Activated CD4-positive, alpha-beta T cell treated with anti-CD3 and anti-CD28 coated beads, Interleukin-2, amount 10 ng/mL, durations not matched to agents 7 days and 5 days (primary cell): ENCODE measurements at regions of chr12 and their contacts with region 1.

Region 1: DNA sequence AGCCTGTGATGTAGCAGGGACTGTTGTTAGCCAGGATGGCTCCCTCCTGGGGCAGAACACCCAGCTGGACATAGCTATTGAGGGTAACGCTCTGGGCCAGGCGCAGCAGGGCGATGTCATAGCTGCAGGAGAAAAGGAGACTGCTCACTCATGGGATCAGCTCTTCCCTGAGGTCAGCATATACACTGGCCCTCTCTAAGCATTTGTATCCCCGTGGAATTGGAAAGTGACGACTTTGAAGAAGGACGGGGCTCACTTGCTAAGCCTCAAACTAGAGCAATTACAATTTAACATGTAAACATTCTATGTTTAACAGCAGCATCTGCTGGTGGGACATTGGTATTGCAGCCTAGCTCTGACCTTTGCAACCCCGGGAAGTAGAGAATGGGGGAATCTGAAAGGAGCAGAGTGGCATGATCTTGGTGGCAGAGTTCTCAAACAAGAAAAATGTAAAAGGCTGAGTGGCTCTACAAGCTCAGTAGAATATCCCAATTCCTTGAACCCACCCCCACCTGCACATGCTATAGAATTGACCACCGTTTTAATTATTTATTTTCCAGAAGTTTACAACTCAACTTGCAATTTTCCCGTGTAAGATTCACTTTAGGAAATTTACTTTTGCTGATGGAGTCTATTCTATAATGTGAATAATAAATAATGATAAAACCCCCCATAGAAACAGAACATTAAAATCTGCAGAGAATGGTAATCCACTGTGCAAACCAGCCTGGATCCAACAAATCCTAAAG is 5.0 kb downstream of the CELA1 start:
- DNase-seq: peak; percentile 81
- H3K4me3 Mint-ChIP-seq: no peak overlapping the region
- H3K27ac Mint-ChIP-seq: peak overlapping the region; percentile 69
- H3K4me1 Mint-ChIP-seq: peaks cover 13% of the 10 kb centered on the region
- H3K27me3 Mint-ChIP-seq: no peaks in the 10 kb centered on the region

Region 2: DNA sequence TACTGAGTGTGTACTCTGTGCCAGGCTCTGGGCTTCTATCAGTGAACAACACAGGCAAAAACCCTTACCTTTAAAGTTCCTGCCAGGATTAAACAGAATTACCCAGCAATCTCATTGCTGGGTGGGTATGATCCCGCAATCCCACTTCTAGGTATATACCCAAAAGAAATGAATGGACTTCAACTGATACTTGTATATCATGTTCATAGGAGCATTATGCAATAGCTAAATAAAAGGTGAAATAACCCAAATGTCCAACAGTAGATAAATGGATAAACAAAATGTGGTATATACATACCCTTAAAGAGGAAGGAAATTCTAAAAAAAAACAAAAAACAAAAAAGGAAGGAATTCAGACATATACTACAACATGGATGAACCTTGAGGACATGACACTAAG is 88.2 kb before region 1 on chr12:
- CTCF ChIA-PET with region 1: interaction called, 10 read pairs
- POLR2A ChIA-PET with region 1: no interaction called
- DNase-seq: no peak
- H3K4me3 Mint-ChIP-seq: no peak overlapping the region
- H3K27ac Mint-ChIP-seq: no peak overlapping the region
- H3K4me1 Mint-ChIP-seq: peaks cover 7% of the 10 kb centered on the region
- H3K27me3 Mint-ChIP-seq: no peaks in the 10 kb centered on the region

Region 3: GRCh38 chr12:51270067-51270970 is 71.1 kb before region 1 on chr12 and contains the start of gene SMAGP:
- CTCF ChIA-PET with region 1: interaction called, 20 read pairs
- POLR2A ChIA-PET with region 1: no interaction called
- DNase-seq: peak; percentile 44
- H3K4me3 Mint-ChIP-seq: peak within 1 kb of the TSS; percentile 75
- H3K27ac Mint-ChIP-seq: peak within 1 kb of the TSS; percentile 64
- H3K4me1 Mint-ChIP-seq: peaks cover 26% of the 10 kb centered on the region
- H3K27me3 Mint-ChIP-seq: peaks cover 26% of the 10 kb centered on the region
- total RNA-seq, gene SMAGP: 1.6 to 1.7 TPM

Region 4: DNA sequence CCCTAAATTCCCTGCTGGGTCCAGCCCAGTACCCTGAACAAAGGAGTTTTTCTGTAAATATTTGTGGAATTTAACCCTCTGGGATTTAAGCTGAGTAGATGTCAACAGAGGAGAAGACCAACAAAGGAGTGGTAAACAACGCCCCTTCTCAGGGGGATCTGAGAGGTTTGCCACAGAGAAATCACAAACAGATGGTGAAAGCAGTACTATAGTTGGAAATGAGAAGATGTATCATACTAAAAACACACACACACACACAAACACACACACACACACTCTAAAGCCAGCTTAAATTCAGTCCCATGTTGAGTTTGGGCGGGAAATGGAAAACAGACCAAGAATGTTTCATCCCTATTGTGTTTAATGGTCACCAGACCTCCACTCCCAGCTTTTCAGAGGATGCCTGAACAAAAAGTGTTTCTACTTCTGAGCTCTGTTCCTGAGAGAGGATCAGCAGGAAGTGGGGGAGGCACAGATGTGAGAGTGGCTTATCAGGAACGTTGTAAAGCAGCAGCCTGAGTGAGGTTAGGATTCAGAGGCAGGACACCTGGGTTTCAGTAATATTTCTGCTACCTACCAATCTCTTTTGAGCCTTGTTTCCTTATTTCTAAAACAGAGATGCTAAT is 20.6 kb before region 1 on chr12:
- CTCF ChIA-PET with region 1: interaction called, 11 read pairs
- POLR2A ChIA-PET with region 1: no interaction called
- DNase-seq: peak; percentile 24
- H3K4me3 Mint-ChIP-seq: peak overlapping the region; percentile 93
- H3K27ac Mint-ChIP-seq: peak overlapping the region; percentile 94
- H3K4me1 Mint-ChIP-seq: peaks cover 73% of the 10 kb centered on the region
- H3K27me3 Mint-ChIP-seq: no peaks in the 10 kb centered on the region

Region 5: GRCh38 chr12:51329742-51330141 is 11.7 kb before region 1 on chr12:
- CTCF ChIA-PET with region 1: interaction called, 35 read pairs
- POLR2A ChIA-PET with region 1: no interaction called
- DNase-seq: peak; percentile 22
- H3K4me3 Mint-ChIP-seq: peak overlapping the region; percentile 39
- H3K27ac Mint-ChIP-seq: peak overlapping the region; percentile 88
- H3K4me1 Mint-ChIP-seq: peaks cover 62% of the 10 kb centered on the region
- H3K27me3 Mint-ChIP-seq: no peaks in the 10 kb centered on the region

Region 6: GRCh38 chr12:51351913-51352532 is 10.6 kb after region 1 on chr12:
- CTCF ChIA-PET with region 1: interaction called, 46 read pairs
- POLR2A ChIA-PET with region 1: no interaction called
- DNase-seq: peak; percentile 60
- H3K4me3 Mint-ChIP-seq: no peak overlapping the region
- H3K27ac Mint-ChIP-seq: no peak overlapping the region
- H3K4me1 Mint-ChIP-seq: no peaks in the 10 kb centered on the region
- H3K27me3 Mint-ChIP-seq: no peaks in the 10 kb centered on the region